T-cell (primary cell): ENCODE measurements at regions of chr3 and their contacts with region 1.

Region 1: DNA sequence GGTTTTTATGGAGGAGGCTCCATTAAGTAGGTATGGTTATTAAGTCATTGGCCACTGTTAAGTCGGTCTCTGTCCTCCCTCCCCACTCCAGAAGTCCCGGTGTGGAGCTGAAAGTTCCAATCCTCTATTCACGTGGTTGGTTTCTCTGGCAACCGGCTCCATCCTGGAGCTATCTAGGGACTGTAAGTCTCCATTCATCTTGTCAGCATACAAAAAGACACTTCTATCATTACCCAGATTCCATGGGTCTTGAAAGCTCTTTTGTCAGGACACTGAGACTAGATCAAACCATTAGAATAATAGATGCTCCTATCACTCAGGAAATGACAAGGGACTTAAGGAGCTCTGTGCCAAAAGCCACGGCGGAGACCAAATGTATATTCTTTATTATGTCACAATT is 110.3 kb downstream of the PIK3CB start:
- DNase-seq: no peak
- ATAC-seq: no peak
- H3K4me3 ChIP-seq: no peak overlapping the region
- H3K4me3 Mint-ChIP-seq: no peak overlapping the region
- H3K27ac ChIP-seq: no peak overlapping the region
- H3K27ac Mint-ChIP-seq: no peak overlapping the region
- H3K4me1 ChIP-seq: peaks cover 2 to 3% of the 10 kb centered on the region in 2 experiments
- H3K4me1 Mint-ChIP-seq: peaks cover 6 to 18% (median 17%) of the 10 kb centered on the region in 3 donors
- H3K27me3 ChIP-seq: no peaks in the 10 kb centered on the region
- H3K27me3 Mint-ChIP-seq: no peaks in the 10 kb centered on the region

Region 2: DNA sequence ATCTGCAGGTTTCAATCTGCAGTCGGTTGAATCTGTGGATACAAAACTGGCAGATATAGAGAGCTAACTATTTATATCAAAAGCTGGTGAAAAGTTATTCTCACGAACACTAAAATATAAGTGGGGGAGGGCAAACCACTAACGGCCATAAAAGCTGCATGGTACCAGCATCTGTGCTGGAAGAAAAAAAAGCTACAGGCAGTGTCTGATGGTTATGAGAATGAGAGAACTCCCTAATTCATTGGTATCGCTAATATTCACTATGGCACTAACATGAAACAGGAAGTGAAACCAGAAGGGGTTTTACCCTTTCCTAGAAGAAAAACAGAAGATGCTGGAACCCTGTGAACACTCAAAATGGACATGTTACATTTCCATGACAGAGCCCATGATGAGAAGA is 146.3 kb before region 1 on chr3:
- CTCF ChIA-PET with region 1: interaction called in 1 of 2 experiments, 11 read pairs
- POLR2A ChIA-PET with region 1: no interaction called
- DNase-seq: peak in 1 of 35 experiments; percentile 13
- ATAC-seq: peak in 3 of 4 experiments; percentile 41 to 48 (median 43)
- H3K4me3 ChIP-seq: peak overlapping the region in 1 of 2 donors; percentile 6
- H3K4me3 Mint-ChIP-seq: peak overlapping the region; percentile 51 to 76 (median 62)
- H3K27ac ChIP-seq: no peak overlapping the region
- H3K27ac Mint-ChIP-seq: peak overlapping the region; percentile 50 to 67
- H3K4me1 ChIP-seq: peaks cover 6 to 8% of the 10 kb centered on the region in 2 experiments
- H3K4me1 Mint-ChIP-seq: peaks cover 20 to 34% (median 28%) of the 10 kb centered on the region in 3 donors
- H3K27me3 ChIP-seq: no peaks in the 10 kb centered on the region
- H3K27me3 Mint-ChIP-seq: no peaks in the 10 kb centered on the region